BJ (cell line): ENCODE measurements at regions of chr17 and their contacts with region 1.

Region 1: DNA sequence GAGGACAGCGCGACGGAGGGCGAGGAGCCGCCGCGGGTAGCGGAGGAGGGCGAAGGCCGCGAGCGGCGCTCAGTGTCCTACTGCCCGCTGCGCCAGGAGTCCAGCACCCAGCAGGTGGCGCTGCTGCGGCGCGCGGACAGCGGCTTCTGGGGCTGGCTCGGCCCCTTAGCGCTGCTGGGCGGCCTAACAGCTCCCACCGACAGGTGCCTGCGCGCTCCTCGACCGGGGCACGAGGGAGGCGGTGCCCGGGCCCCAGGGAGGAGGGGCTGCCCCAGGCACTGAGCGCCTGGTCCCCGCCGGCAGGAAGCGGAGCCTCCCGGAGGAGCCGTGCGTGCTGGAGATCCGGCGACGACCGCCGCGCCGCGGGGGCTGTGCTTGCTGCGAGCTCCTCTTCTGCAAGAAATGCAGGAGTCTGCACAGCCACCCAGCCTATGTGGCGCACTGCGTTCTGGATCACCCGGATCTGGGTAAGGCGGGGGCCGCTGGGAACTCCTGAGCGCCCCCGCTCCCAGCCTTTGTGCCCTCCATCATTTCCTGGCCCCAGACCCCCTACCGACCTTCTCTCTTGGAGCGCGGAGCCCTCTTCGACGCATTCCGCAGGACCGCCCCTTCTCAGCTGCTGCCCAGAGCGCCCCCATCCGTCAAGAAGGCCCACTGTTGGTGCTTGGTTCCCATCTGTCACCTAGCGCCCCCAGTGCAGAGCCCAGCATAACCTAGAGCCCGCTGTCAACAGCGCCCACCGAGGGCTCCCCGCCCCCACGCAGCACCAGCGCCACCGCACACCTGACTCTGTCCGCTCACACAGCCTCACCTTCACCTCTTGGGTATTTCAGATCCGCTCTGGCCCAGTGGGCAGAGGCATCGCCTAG is 3.7 kb downstream of the C17orf50 start:
- DNase-seq: no peak
- H3K4me3 ChIP-seq: peak overlapping the region; percentile 34
- H3K27me3 ChIP-seq: peaks cover 11% of the 10 kb centered on the region
- CTCF ChIP-seq: peak; percentile 84

Region 2: GRCh38 chr17:35752945-35753764 is 11.2 kb before region 1 on chr17 and contains the start of gene GAS2L2:
- CTCF ChIA-PET with region 1: interaction called, 20 read pairs
- POLR2A ChIA-PET with region 1: no interaction called
- DNase-seq: no peak
- H3K4me3 ChIP-seq: no peak within 1 kb of the TSS
- H3K27me3 ChIP-seq: peaks cover 18% of the 10 kb centered on the region
- CTCF ChIP-seq: no peak
- polyA plus RNA-seq, gene GAS2L2: not detected in 2 replicates

Region 3: DNA sequence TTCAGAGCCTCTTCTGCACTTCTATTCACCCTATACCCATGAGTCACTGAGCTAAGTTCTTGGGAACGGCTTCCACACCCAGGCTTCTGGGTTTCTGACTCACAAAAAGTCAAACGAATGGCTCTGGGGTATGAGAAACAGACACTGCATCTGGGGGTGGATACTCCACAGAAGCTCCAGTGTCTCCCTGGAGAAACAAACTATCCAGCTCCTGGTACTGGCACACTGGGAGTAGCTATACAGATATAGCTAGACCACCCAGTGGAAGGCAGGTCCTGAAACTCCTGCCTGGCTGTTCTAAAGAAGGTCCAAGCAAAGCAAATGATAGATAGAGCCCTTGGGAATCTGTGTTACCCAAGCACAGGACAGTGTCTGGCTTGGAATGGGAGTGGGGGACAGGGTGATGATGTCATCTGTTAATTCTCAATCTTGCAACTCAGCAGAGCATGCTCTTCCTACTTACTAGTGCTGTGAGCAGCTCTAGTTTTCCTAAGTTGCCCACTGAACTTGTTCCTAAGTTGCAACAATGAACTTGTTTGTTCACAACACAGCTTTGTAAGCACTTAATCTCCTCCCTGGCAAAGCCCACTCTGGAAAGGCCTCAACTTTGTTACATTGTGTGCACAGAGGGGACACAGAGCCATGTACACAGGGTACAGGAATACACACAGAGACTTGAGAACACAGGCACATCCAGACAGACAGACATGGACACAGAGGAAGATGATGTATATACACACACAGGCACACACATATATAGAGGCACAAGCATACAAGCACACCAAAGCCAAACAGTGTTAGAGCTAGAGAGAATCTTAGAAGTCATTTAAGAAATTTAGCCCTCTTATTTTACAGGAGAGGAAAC is 24.4 kb after region 1 on chr17:
- CTCF ChIA-PET with region 1: interaction called, 44 read pairs
- POLR2A ChIA-PET with region 1: no interaction called
- DNase-seq: peak; percentile 78
- H3K4me3 ChIP-seq: no peak overlapping the region
- H3K27me3 ChIP-seq: peaks cover 13% of the 10 kb centered on the region
- CTCF ChIP-seq: no peak

Region 4: GRCh38 chr17:35808962-35809854 is 44.9 kb after region 1 on chr17 and contains the start of gene TAF15:
- CTCF ChIA-PET with region 1: interaction called, 425 read pairs
- POLR2A ChIA-PET with region 1: interaction called, 3 read pairs
- DNase-seq: peak; percentile 94
- H3K4me3 ChIP-seq: peak within 1 kb of the TSS; percentile 71
- H3K27me3 ChIP-seq: no peaks in the 10 kb centered on the region
- CTCF ChIP-seq: peak; percentile 91
- polyA plus RNA-seq, gene TAF15: 27.4 and 49.6 TPM in 2 replicates